ENCODE measurements at regions of chr17 and their contacts with region 1.

Region 1: DNA sequence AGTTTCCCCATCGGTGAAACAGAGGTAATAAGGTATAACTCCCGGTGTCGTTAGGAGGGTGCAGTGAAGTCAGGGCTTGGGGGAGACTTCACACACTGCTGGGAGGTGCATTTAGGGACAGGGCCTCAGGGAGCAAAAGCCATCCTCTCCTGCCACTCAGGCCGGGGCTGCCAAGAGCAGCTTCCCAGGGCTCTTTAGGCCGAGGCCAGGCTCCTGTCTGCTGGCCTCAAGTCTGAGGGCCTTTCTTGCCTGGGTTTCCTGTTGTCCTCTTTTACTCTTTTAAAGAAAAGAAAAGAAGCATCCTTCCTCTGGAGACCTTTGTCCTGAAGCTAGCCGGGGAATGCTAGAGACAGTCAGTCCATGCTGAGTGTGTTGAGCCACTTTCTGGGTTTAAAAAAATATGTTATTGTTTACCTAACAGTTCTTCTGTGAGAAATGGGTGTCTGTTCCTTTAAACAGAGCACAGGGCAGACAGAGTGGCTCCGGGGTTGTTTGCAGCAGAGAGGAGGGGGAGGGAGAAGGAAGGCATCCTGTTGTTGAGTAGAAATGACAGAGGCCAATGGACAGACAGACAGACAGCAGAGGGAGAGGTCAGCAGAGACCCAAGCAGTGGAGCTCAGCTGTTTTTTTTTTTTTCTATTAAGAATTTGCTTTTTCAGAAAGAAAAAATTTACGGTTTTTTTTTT is 79.1 kb downstream of the C17orf67 start:
- DNase-seq: peak; percentile 53
- H3K4me3 ChIP-seq: no peak overlapping the region
- H3K27ac ChIP-seq: peak overlapping the region; percentile 86
- H3K4me1 ChIP-seq: peaks cover 47% of the 10 kb centered on the region
- H3K27me3 ChIP-seq: no peaks in the 10 kb centered on the region
- CTCF ChIP-seq: no peak
- POLR2A ChIP-seq: no peak

Region 2: GRCh38 chr17:56679115-56679766 is 75.4 kb before region 1 on chr17:
- CTCF ChIA-PET with region 1: no interaction called
- POLR2A ChIA-PET with region 1: no interaction called
- dilution Hi-C with region 1: no loop called
- intact Hi-C with region 1: loop called (anchors 1 kb)
- DNase-seq: peak; percentile 54
- H3K4me3 ChIP-seq: peak overlapping the region; percentile 19 to 58 (median 21)
- H3K27ac ChIP-seq: no peak overlapping the region
- H3K4me1 ChIP-seq: peaks cover 32% of the 10 kb centered on the region
- H3K27me3 ChIP-seq: peaks cover 27 to 38% of the 10 kb centered on the region in 2 experiments
- CTCF ChIP-seq: peak; percentile 60 to 61
- POLR2A ChIP-seq: no peak

Region 3: GRCh38 chr17:56699186-56699895 is 55.3 kb before region 1 on chr17:
- CTCF ChIA-PET with region 1: no interaction called
- POLR2A ChIA-PET with region 1: no interaction called
- dilution Hi-C with region 1: no loop called
- intact Hi-C with region 1: loop called (anchors 1 kb)
- DNase-seq: peak; percentile 56
- H3K4me3 ChIP-seq: no peak overlapping the region
- H3K27ac ChIP-seq: peak overlapping the region; percentile 88
- H3K4me1 ChIP-seq: peaks cover 18% of the 10 kb centered on the region
- H3K27me3 ChIP-seq: no peaks in the 10 kb centered on the region
- CTCF ChIP-seq: no peak
- POLR2A ChIP-seq: peak; percentile 42

Region 4: GRCh38 chr17:56773124-56773523 is 18.5 kb after region 1 on chr17:
- CTCF ChIA-PET with region 1: no interaction called
- POLR2A ChIA-PET with region 1: no interaction called
- dilution Hi-C with region 1: no loop called
- intact Hi-C with region 1: no loop called
- DNase-seq: no peak
- H3K4me3 ChIP-seq: no peak overlapping the region
- H3K27ac ChIP-seq: no peak overlapping the region
- H3K4me1 ChIP-seq: no peaks in the 10 kb centered on the region
- H3K27me3 ChIP-seq: peaks cover 11 to 15% of the 10 kb centered on the region in 2 experiments
- CTCF ChIP-seq: no peak
- POLR2A ChIP-seq: no peak

Region 5: DNA sequence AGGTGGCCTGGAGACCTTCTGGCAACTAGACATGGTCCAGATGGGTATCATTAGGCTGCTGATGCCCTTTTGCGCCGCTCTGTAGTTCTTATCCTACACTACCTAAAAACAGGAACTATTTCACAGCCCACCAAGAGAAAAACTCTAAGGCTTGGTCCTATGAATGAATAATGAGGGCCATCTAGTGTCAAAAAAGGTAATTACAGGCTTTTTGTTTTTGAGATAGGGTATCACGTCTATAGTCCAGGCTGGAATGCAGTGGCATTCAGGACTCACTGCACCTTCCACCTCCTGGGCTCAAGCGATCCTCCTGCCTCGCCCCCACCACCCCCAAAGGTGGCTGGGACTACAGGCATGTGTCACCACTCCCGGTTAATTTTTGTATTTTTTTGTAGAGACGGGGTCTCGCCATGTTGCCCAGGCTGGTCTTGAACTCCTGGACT is 185.3 kb after region 1 on chr17:
- CTCF ChIA-PET with region 1: no interaction called
- POLR2A ChIA-PET with region 1: no interaction called
- dilution Hi-C with region 1: no loop called
- intact Hi-C with region 1: loop called (anchors 2 kb)
- DNase-seq: peak; percentile 77
- H3K4me3 ChIP-seq: no peak overlapping the region
- H3K27ac ChIP-seq: peak overlapping the region; percentile 35
- H3K4me1 ChIP-seq: peaks cover 24% of the 10 kb centered on the region
- H3K27me3 ChIP-seq: no peaks in the 10 kb centered on the region
- CTCF ChIP-seq: peak; percentile 51 to 53
- POLR2A ChIP-seq: no peak